Activated CD4-positive, alpha-beta memory T cell treated with anti-CD3 and anti-CD28 coated beads for 36 hours (primary cell): ENCODE measurements at regions of chr5 and their contacts with region 1.

Region 1: GRCh38 chr5:151115274-151115905 is 34.6 kb upstream of the TNIP1 start:
- DNase-seq: peak; percentile 80
- H3K4me3 Mint-ChIP-seq: no peak overlapping the region
- H3K27ac Mint-ChIP-seq: no peak overlapping the region
- H3K4me1 Mint-ChIP-seq: no peaks in the 10 kb centered on the region
- H3K27me3 Mint-ChIP-seq: no peaks in the 10 kb centered on the region

Region 2: GRCh38 chr5:151037561-151038411 is 77.6 kb before region 1 on chr5:
- CTCF ChIA-PET with region 1: interaction called, 47 read pairs
- POLR2A ChIA-PET with region 1: no interaction called
- intact Hi-C with region 1: no loop called
- DNase-seq: no peak
- H3K4me3 Mint-ChIP-seq: no peak overlapping the region
- H3K27ac Mint-ChIP-seq: no peak overlapping the region
- H3K4me1 Mint-ChIP-seq: peaks cover 10% of the 10 kb centered on the region
- H3K27me3 Mint-ChIP-seq: no peaks in the 10 kb centered on the region

Region 3: GRCh38 chr5:151068433-151069197 is 46.8 kb before region 1 on chr5:
- CTCF ChIA-PET with region 1: interaction called, 29 read pairs
- POLR2A ChIA-PET with region 1: no interaction called
- intact Hi-C with region 1: no loop called
- DNase-seq: peak; percentile 80
- H3K4me3 Mint-ChIP-seq: peak overlapping the region; percentile 60
- H3K27ac Mint-ChIP-seq: peak overlapping the region; percentile 94
- H3K4me1 Mint-ChIP-seq: peaks cover 98% of the 10 kb centered on the region
- H3K27me3 Mint-ChIP-seq: no peaks in the 10 kb centered on the region

Region 4: DNA sequence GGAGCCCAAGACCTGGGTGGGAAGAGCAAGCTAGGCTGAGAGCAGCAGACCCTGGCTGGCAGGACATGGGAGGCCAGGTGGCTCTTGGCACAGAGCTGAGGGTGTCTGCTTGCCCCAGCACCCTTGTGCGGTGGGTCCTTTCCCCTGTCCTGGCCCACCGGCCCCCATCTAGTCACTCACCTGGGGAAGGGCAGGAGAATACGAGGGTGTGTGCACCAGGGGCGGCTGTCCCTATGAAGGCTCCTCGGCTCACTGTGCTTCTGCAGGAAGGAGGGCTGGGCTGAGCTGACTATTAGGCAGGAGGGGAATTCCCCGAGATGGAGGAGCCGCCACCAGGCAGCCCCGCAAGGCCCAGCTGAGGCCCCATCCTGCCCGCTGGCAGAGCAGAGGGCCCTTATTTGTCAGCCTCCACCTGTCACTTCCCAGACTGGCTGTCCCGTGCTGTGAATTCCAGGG is 28.5 kb before region 1 on chr5:
- CTCF ChIA-PET with region 1: interaction called, 60 read pairs
- POLR2A ChIA-PET with region 1: interaction called, 4 read pairs
- intact Hi-C with region 1: loop called (anchors 1 kb)
- DNase-seq: peak; percentile 85
- H3K4me3 Mint-ChIP-seq: peak overlapping the region; percentile 89
- H3K27ac Mint-ChIP-seq: peak overlapping the region; percentile 89
- H3K4me1 Mint-ChIP-seq: peaks cover 54% of the 10 kb centered on the region
- H3K27me3 Mint-ChIP-seq: no peaks in the 10 kb centered on the region

Region 5: DNA sequence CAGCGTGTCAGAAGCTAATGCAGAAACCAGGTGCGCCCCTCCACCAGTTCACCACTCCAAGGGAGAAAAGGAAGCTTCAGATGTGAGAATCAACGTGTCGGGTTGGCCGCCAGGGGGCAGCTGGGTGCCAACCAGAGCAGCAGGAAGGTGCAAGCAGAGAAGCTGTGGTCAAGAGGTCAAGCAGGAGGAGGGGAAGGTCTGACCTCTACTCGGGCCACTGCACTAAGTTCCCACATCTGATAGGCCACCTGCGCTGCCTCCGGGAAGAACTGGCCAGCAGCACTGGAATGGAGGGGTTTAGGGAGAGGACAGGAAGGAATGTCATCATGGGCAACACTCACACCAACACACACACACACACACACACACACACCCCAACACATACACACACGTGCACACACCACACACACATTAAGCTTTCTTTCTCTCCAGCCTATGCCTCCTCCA is 10.8 kb after region 1 on chr5:
- CTCF ChIA-PET with region 1: interaction called, 86 read pairs
- POLR2A ChIA-PET with region 1: interaction called, 3 read pairs
- intact Hi-C with region 1: no loop called
- DNase-seq: peak; percentile 74
- H3K4me3 Mint-ChIP-seq: no peak overlapping the region
- H3K27ac Mint-ChIP-seq: peak overlapping the region; percentile 90
- H3K4me1 Mint-ChIP-seq: peaks cover 64% of the 10 kb centered on the region
- H3K27me3 Mint-ChIP-seq: no peaks in the 10 kb centered on the region

Region 6: DNA sequence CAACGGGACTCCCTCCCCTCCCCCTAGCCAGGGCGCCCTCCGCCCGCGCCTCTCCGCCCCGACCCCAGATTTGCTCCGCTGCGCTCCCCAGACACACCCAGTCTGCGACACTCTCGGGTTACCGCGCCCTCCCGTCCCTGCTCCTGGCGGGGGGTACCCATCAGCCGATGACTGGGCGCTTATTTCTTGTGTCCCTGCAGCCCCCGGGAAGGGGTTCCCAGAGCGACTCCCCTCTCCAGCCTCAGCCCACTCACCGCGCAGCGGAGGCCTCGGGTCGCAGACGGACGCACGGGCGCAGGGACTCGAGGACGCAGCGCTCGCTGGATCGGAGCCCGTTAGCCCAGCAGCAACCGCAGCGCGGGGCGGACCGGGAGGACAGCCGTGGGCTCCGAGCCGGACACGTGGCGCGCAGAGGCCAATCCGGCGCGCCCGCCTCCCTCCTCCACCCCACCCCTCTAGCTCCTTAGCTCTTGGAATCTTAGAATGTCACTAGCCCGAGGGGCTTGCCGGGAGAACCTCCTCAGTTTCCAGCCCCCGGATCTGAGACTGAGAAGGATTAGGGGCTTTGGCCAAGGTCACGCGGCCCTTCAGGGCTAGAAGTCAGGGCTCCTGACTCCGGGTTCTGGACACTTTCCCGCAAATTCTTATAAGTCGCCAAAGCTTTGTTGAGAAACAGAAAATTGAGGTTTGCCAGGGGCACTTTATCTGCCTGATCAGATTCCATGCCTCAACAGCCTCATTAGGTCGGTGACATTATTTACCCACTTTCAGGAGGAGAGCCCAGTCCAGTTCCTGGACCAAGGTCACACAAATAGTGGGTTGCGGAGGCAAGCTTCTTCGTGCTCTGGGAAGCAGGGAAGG is 42.3 kb after region 1 on chr5 and contains the start of gene ANXA6:
- CTCF ChIA-PET with region 1: interaction called, 101 read pairs
- POLR2A ChIA-PET with region 1: interaction called, 3 read pairs
- intact Hi-C with region 1: no loop called
- DNase-seq: peak; percentile 80
- H3K4me3 Mint-ChIP-seq: peak within 1 kb of the TSS; percentile 97
- H3K27ac Mint-ChIP-seq: peak within 1 kb of the TSS; percentile 90
- H3K4me1 Mint-ChIP-seq: peaks cover 52% of the 10 kb centered on the region
- H3K27me3 Mint-ChIP-seq: no peaks in the 10 kb centered on the region
- total RNA-seq, gene ANXA6: 430 to 443 TPM